ENCODE measurements at regions of chr10 and their contacts with region 1.

Region 1: DNA sequence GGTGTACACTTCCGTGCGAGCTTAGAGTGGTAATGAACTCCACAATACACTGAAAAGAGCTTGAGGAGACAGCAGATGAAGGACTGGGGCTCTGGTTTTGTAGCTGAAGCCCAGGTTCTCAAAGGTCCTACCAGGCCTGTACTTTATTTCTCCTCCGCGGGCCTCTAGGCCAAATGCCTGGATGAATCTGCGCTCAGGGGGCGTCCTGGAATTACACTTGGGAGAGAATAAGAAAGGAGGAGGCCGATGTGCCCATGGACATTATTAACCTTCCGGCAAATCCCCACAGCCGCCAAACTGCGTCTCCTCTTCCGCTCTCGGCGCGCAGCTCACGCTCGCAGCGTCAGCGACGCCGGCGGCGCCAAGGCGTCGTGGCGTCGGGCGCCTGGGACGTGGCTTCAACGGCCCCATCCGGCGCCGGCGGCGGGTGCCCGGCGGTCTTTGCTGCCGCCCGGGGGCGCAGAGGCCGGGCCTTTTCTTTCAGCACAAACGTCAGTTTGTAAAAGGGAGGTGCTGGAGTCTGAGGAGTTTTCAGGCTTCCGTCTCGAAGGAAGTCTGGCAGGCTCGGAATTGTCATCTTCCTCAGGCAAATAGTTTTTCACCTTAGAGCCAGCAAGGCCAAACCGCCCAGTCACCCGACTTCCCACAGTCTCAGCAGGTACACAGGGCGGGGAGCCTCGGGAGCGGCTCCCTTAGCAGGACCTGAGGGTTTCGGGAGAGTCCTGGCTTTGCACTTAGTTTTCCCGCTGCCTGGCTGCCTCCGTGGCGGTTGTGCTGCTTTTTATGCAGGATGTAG is at the start of gene CCDC7:
- DNase-seq: peak; percentile 43 to 92 (median 84)

Region 2: GRCh38 chr10:31697271-31698180 is 748.4 kb before region 1 on chr10:
- intact Hi-C with region 1: no loop called
- DNase-seq: peak; percentile 23 to 84 (median 59)

Region 3: DNA sequence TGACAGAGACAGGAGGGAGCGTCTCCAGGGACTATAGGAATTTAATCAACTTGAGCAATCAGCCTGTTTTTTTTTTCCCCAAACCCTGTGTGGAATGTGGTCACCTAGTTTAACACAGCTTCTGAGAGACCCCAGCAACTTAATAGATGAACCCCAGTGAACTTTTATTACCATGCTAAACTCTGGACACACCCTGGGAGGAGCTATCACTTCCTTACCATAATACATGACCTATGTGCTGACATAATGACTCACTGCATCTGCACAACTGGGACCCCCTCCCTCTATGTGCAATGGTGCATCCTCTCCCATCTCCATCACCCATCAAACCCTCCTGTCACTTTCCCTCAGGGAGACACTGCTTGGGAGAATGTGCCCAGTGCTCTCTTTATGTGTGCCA is 182.6 kb before region 1 on chr10:
- intact Hi-C with region 1: loop called (anchors 10 kb)
- DNase-seq: peak in 1 of 42 donors; percentile 4

Measured in head of caudate nucleus (tissue), 42 donors.